ENCODE measurements at regions of chr16 and their contacts with region 1.

Region 1: GRCh38 chr16:56866943-56867830 is 2.2 kb downstream of the SLC12A3 start:
- DNase-seq: peak; percentile 66
- ATAC-seq: peak; percentile 55
- H3K4me3 Mint-ChIP-seq: no peak overlapping the region
- H3K27ac Mint-ChIP-seq: no peak overlapping the region
- H3K4me1 Mint-ChIP-seq: peaks cover 11% of the 10 kb centered on the region
- H3K27me3 Mint-ChIP-seq: no peaks in the 10 kb centered on the region
- CTCF ChIP-seq: peak; percentile 90

Region 2: GRCh38 chr16:56838622-56839337 is 28.4 kb before region 1 on chr16:
- CTCF ChIA-PET with region 1: interaction called, 10 read pairs
- POLR2A ChIA-PET with region 1: no interaction called
- intact Hi-C with region 1: no loop called
- DNase-seq: no peak
- ATAC-seq: no peak
- H3K4me3 Mint-ChIP-seq: no peak overlapping the region
- H3K27ac Mint-ChIP-seq: no peak overlapping the region
- H3K4me1 Mint-ChIP-seq: peaks cover 8% of the 10 kb centered on the region
- H3K27me3 Mint-ChIP-seq: no peaks in the 10 kb centered on the region
- CTCF ChIP-seq: no peak

Region 3: DNA sequence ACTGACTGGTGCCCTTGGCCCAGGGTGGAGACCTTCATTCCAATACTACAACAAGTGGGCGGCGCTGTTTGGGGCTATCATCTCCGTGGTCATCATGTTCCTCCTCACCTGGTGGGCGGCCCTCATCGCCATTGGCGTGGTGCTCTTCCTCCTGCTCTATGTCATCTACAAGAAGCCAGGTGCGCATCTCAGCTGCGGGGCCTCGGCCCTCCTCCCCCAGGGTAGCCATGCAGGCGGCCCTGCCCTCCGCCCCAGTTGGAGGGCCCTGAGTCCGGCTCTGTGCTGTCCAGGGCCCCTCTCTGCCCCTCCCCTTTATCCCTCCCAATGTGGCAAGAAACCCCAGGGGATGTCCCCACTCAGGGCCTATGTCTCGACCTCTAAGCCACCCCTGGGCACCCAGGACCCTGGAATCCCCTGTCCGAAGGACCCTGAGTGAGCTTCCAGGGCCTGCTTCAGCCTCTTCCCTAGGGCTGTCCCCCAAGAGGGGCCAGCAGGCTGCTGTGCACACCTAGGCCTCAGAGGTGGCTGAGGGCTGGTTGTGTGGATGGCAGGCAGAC is 16.9 kb after region 1 on chr16:
- CTCF ChIA-PET with region 1: interaction called, 11 read pairs
- POLR2A ChIA-PET with region 1: interaction called, 5 read pairs
- intact Hi-C with region 1: no loop called
- DNase-seq: no peak
- ATAC-seq: no peak
- H3K4me3 Mint-ChIP-seq: no peak overlapping the region
- H3K27ac Mint-ChIP-seq: no peak overlapping the region
- H3K4me1 Mint-ChIP-seq: no peaks in the 10 kb centered on the region
- H3K27me3 Mint-ChIP-seq: no peaks in the 10 kb centered on the region
- CTCF ChIP-seq: no peak

Region 4: DNA sequence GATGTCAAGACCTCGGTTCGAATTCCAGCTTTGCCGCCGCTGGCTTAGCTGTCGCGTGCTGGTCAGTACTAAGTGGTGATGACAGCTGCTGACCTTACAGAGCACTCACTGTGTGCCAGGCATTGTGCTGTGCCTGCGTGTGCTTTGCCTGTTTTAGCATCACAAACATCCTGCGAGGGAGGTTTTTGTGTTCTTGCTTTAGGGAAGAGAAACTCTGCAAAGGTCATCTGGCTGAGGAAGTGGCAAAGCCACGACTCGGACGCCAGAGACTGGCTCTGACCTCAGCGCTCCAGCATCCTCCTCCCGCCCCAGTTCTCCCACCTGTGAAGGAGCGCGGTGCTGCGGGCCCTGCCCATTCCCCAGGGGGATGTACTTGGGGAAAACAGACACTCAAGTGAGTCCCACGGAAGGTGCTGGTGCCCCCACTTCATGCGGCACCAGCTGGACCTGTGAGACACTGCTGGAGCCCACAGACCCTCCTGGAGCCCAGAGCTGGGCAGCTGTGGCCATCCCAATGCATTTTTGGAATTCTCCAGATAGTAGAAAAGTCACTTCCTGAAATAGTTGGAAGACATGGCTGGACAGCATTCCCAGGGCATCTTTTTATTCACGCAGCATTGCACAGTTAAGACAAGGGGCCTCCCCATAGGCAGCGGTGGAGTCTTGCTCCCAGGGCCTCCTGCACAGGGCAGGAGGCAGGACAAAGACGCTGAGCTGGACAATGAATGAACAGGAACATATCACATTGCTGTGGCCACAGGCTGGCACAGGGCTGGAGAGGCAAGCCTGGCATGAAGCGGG is 44.8 kb after region 1 on chr16:
- CTCF ChIA-PET with region 1: interaction called, 14 read pairs
- POLR2A ChIA-PET with region 1: no interaction called
- intact Hi-C with region 1: no loop called
- DNase-seq: no peak
- ATAC-seq: no peak
- H3K4me3 Mint-ChIP-seq: no peak overlapping the region
- H3K27ac Mint-ChIP-seq: no peak overlapping the region
- H3K4me1 Mint-ChIP-seq: peaks cover 34% of the 10 kb centered on the region
- H3K27me3 Mint-ChIP-seq: no peaks in the 10 kb centered on the region
- CTCF ChIP-seq: no peak

Region 5: GRCh38 chr16:56944954-56945839 is 78.0 kb after region 1 on chr16:
- CTCF ChIA-PET with region 1: interaction called, 108 read pairs
- POLR2A ChIA-PET with region 1: interaction called, 7 read pairs
- intact Hi-C with region 1: no loop called
- DNase-seq: peak; percentile 66
- ATAC-seq: peak; percentile 78
- H3K4me3 Mint-ChIP-seq: peak overlapping the region; percentile 21
- H3K27ac Mint-ChIP-seq: peak overlapping the region; percentile 89
- H3K4me1 Mint-ChIP-seq: peaks cover 54% of the 10 kb centered on the region
- H3K27me3 Mint-ChIP-seq: no peaks in the 10 kb centered on the region
- CTCF ChIP-seq: no peak